CD8-positive, alpha-beta T cell (primary cell): ENCODE measurements at regions of chr15 and their contacts with region 1.

Region 1: DNA sequence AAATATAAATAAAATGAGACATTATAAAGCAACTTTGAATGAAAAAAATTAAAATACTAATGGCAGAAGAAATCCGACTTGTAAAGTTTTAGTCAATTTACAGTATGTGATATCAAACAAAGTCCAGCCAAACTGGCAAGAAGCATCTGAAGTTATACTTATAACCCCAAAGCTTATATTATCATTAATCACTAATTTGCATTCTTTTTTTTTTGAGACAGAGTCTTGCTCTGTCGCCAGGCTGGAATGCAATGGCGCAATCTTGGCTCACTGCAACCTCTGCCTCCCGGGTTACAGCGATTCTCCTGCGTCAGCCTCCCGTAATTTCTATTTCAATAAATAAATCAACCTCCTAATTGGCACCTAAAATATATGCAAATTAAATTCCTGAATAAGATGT is 80.1 kb downstream of the AQR start:
- DNase-seq: no peak
- ATAC-seq: no peak
- H3K4me3 ChIP-seq: no peak overlapping the region
- H3K4me3 Mint-ChIP-seq: no peak overlapping the region
- H3K27ac ChIP-seq: no peak overlapping the region
- H3K27ac Mint-ChIP-seq: no peak overlapping the region
- H3K4me1 ChIP-seq: no peaks in the 10 kb centered on the region
- H3K4me1 Mint-ChIP-seq: no peaks in the 10 kb centered on the region
- H3K27me3 ChIP-seq: no peaks in the 10 kb centered on the region
- H3K27me3 Mint-ChIP-seq: no peaks in the 10 kb centered on the region
- CTCF ChIP-seq: no peak

Region 2: GRCh38 chr15:34904527-34904926 is 15.1 kb after region 1 on chr15:
- CTCF ChIA-PET with region 1: no interaction called
- POLR2A ChIA-PET with region 1: no interaction called
- intact Hi-C with region 1: loop called in 1 of 2 experiments (anchors 1 kb)
- DNase-seq: no peak
- ATAC-seq: no peak
- H3K4me3 ChIP-seq: no peak overlapping the region
- H3K4me3 Mint-ChIP-seq: no peak overlapping the region
- H3K27ac ChIP-seq: no peak overlapping the region
- H3K27ac Mint-ChIP-seq: no peak overlapping the region
- H3K4me1 ChIP-seq: no peaks in the 10 kb centered on the region
- H3K4me1 Mint-ChIP-seq: no peaks in the 10 kb centered on the region
- H3K27me3 ChIP-seq: no peaks in the 10 kb centered on the region
- H3K27me3 Mint-ChIP-seq: no peaks in the 10 kb centered on the region
- CTCF ChIP-seq: no peak